CD4-positive, alpha-beta T cell (primary cell): ENCODE measurements at regions of chr3 and their contacts with region 1.

Region 1: GRCh38 chr3:100068826-100069225 is 45.5 kb downstream of the FILIP1L start:
- DNase-seq: peak; percentile 57 to 84 (median 68)
- ATAC-seq: peak; percentile 98
- H3K4me3 ChIP-seq: no peak overlapping the region
- H3K4me3 Mint-ChIP-seq: no peak overlapping the region
- H3K27ac ChIP-seq: no peak overlapping the region
- H3K27ac Mint-ChIP-seq: no peak overlapping the region
- H3K4me1 ChIP-seq: peaks cover 14% of the 10 kb centered on the region
- H3K4me1 Mint-ChIP-seq: peaks cover 39% of the 10 kb centered on the region
- H3K27me3 ChIP-seq: no peaks in the 10 kb centered on the region
- H3K27me3 Mint-ChIP-seq: no peaks in the 10 kb centered on the region
- CTCF ChIP-seq: peak; percentile 76

Region 2: GRCh38 chr3:99159220-99159762 is 909.5 kb before region 1 on chr3:
- CTCF ChIA-PET with region 1: no interaction called
- POLR2A ChIA-PET with region 1: no interaction called
- intact Hi-C with region 1: no loop called
- DNase-seq: no peak
- ATAC-seq: no peak
- H3K4me3 ChIP-seq: no peak overlapping the region
- H3K4me3 Mint-ChIP-seq: no peak overlapping the region
- H3K27ac ChIP-seq: no peak overlapping the region
- H3K27ac Mint-ChIP-seq: no peak overlapping the region
- H3K4me1 ChIP-seq: no peaks in the 10 kb centered on the region
- H3K4me1 Mint-ChIP-seq: no peaks in the 10 kb centered on the region
- H3K27me3 ChIP-seq: no peaks in the 10 kb centered on the region
- H3K27me3 Mint-ChIP-seq: no peaks in the 10 kb centered on the region
- CTCF ChIP-seq: no peak

Region 3: GRCh38 chr3:99833617-99834205 is 235.1 kb before region 1 on chr3:
- CTCF ChIA-PET with region 1: interaction called, 3 read pairs
- POLR2A ChIA-PET with region 1: no interaction called
- intact Hi-C with region 1: loop called in 1 of 2 experiments (anchors 10 kb)
- DNase-seq: no peak
- ATAC-seq: no peak
- H3K4me3 ChIP-seq: no peak overlapping the region
- H3K4me3 Mint-ChIP-seq: no peak overlapping the region
- H3K27ac ChIP-seq: no peak overlapping the region
- H3K27ac Mint-ChIP-seq: no peak overlapping the region
- H3K4me1 ChIP-seq: no peaks in the 10 kb centered on the region
- H3K4me1 Mint-ChIP-seq: no peaks in the 10 kb centered on the region
- H3K27me3 ChIP-seq: no peaks in the 10 kb centered on the region
- H3K27me3 Mint-ChIP-seq: no peaks in the 10 kb centered on the region
- CTCF ChIP-seq: no peak

Region 4: GRCh38 chr3:100029689-100030088 is 39.1 kb before region 1 on chr3:
- CTCF ChIA-PET with region 1: no interaction called
- POLR2A ChIA-PET with region 1: no interaction called
- intact Hi-C with region 1: no loop called
- DNase-seq: no peak
- ATAC-seq: no peak
- H3K4me3 ChIP-seq: no peak overlapping the region
- H3K4me3 Mint-ChIP-seq: no peak overlapping the region
- H3K27ac ChIP-seq: no peak overlapping the region
- H3K27ac Mint-ChIP-seq: no peak overlapping the region
- H3K4me1 ChIP-seq: no peaks in the 10 kb centered on the region
- H3K4me1 Mint-ChIP-seq: no peaks in the 10 kb centered on the region
- H3K27me3 ChIP-seq: no peaks in the 10 kb centered on the region
- H3K27me3 Mint-ChIP-seq: no peaks in the 10 kb centered on the region
- CTCF ChIP-seq: no peak

Region 5: DNA sequence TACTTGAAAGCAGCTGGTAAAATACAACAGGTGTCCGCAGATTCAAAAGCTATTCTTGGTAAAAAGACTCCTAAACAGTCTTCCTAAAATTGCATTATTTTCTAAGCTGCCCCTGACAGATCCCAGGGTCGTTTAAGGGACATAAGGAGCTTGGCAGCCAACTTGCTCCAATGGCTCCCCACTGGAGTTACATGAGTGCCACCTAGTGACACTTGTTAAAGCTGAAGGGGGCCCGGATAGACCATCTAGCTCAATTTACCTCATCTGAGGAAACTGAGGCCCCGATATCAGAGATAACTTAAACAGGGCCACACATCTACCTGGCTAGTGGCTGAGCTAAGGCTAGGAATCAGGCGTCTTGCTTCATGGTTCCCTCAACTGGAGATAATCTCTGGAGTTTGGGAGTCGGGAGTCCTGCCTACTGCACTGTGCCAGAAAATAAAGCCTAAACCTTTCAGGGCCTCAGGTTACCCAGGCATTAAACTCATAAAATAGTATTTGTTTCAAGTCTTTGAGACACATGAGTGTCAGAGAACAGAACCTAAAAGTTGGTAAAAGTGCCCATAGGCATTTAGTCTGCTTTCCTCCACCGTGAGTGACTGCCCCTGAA is 185.4 kb after region 1 on chr3:
- CTCF ChIA-PET with region 1: interaction called, 14 read pairs
- POLR2A ChIA-PET with region 1: interaction called, 6 read pairs
- intact Hi-C with region 1: loop called (anchors 1 to 5 kb)
- DNase-seq: peak in 5 of 14 experiments; percentile 11 to 64 (median 37)
- ATAC-seq: peak; percentile 43
- H3K4me3 ChIP-seq: no peak overlapping the region
- H3K4me3 Mint-ChIP-seq: no peak overlapping the region
- H3K27ac ChIP-seq: no peak overlapping the region
- H3K27ac Mint-ChIP-seq: no peak overlapping the region
- H3K4me1 ChIP-seq: no peaks in the 10 kb centered on the region
- H3K4me1 Mint-ChIP-seq: peaks cover 9% of the 10 kb centered on the region
- H3K27me3 ChIP-seq: no peaks in the 10 kb centered on the region
- H3K27me3 Mint-ChIP-seq: no peaks in the 10 kb centered on the region
- CTCF ChIP-seq: peak; percentile 50

Region 6: DNA sequence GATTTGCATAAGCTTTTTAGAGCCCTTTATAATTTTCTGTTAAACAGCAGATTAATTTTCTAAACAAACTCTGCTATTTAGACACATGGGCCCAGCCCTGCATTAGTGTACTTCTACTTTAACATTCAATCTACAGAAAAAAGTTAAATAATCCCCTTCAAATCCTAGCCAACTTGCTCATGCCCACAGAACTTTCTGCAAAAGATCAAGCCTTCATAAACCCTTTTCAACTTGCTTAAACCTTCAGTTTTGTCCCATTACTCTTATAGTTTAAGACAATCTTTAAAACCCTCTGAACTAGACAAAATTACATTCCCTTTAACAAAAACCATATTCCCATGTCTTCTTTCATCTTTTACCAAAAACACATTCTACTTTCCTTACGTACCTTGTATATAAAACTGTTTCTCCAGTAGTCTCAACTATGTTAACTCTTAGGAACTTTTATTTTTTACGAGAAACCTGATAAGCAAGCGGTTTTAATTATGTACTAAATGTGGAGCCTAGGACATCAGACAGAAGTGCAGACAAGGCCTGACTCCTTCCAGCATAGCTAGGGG is 515.4 kb after region 1 on chr3:
- CTCF ChIA-PET with region 1: no interaction called
- POLR2A ChIA-PET with region 1: no interaction called
- intact Hi-C with region 1: loop called in 1 of 2 experiments (anchors 2 kb)
- DNase-seq: no peak
- ATAC-seq: no peak
- H3K4me3 ChIP-seq: no peak overlapping the region
- H3K4me3 Mint-ChIP-seq: no peak overlapping the region
- H3K27ac ChIP-seq: no peak overlapping the region
- H3K27ac Mint-ChIP-seq: no peak overlapping the region
- H3K4me1 ChIP-seq: no peaks in the 10 kb centered on the region
- H3K4me1 Mint-ChIP-seq: no peaks in the 10 kb centered on the region
- H3K27me3 ChIP-seq: no peaks in the 10 kb centered on the region
- H3K27me3 Mint-ChIP-seq: peaks cover 3% of the 10 kb centered on the region
- CTCF ChIP-seq: no peak

Region 7: GRCh38 chr3:100590114-100590839 is 521.5 kb after region 1 on chr3:
- CTCF ChIA-PET with region 1: no interaction called
- POLR2A ChIA-PET with region 1: no interaction called
- intact Hi-C with region 1: loop called (anchors 2 kb)
- DNase-seq: peak; percentile 13 to 84 (median 44)
- ATAC-seq: peak; percentile 89
- H3K4me3 ChIP-seq: no peak overlapping the region
- H3K4me3 Mint-ChIP-seq: no peak overlapping the region
- H3K27ac ChIP-seq: no peak overlapping the region
- H3K27ac Mint-ChIP-seq: no peak overlapping the region
- H3K4me1 ChIP-seq: peaks cover 4% of the 10 kb centered on the region
- H3K4me1 Mint-ChIP-seq: no peaks in the 10 kb centered on the region
- H3K27me3 ChIP-seq: no peaks in the 10 kb centered on the region
- H3K27me3 Mint-ChIP-seq: no peaks in the 10 kb centered on the region
- CTCF ChIP-seq: peak; percentile 90